Ovary (tissue), 10 donors: ENCODE measurements at regions of chr3 and their contacts with region 1.

Region 1: DNA sequence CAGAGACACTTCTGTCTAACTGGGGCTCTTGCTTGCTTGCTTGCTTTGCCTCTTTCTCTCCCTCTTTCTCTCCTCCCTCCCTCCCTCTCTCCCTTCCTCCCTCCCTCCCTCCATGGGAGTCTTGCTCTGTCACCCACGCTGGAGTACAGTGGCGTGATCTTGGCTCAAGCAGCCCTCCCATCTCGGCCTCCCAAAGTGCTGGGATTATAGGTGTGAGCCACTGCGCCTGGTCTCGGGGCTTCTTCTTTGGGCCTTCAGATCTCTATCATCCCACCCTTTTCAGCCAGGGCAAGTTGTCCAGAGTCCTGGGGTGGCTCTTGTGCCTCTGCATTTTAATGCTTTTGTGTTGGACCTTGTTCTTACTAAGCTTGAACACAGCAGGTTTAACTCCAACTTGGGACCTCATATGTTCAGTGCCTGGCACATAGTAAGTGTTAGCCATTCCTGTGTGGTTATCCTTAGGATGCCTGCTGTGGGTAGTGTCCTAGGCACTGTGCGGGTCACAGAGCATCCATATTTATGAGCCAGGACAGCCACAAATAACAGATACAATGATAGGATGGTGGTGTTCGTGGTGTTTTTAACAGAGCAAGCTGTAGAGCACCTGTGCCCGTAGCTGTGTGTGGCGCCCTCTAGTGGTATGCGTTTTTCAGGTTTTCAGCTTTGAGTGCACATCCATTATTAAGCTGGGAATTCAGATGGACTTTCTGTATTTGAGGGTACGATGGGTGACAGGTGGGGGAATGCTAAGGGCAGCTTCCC is 75.1 kb downstream of the CCK start:
- DNase-seq: peak; percentile 43 to 72 (median 48)
- H3K4me3 ChIP-seq: no peak overlapping the region
- H3K27ac ChIP-seq: no peak overlapping the region
- H3K4me1 ChIP-seq: no peaks in the 10 kb centered on the region
- H3K27me3 ChIP-seq: no peaks in the 10 kb centered on the region
- CTCF ChIP-seq: peak; percentile 41 to 56 (median 49)
- EP300 ChIP-seq: no peak
- POLR2A ChIP-seq: no peak

Region 2: DNA sequence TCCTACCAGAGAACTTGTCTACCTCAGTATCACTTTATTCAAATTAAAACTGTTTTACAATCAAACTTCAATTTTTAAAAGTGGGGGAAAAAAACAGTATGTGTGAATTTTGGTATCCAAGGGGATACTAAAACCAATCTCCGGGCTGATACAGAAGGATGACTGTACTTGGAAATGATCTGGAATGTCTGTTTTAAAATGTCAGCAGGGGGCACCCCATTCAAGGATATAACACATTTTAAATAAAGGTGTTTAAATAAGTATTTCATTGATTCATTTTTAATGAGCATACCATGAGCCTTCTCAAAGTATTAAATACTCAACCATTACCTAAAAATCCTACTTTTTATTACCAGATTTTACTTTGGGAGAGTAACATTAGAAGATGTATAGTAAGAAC is 296.9 kb before region 1 on chr3:
- intact Hi-C with region 1: loop called in 1 of 4 experiments (anchors 10 kb)
- DNase-seq: peak in 1 of 5 donors; percentile 25
- H3K4me3 ChIP-seq: no peak overlapping the region
- H3K27ac ChIP-seq: no peak overlapping the region
- H3K4me1 ChIP-seq: no peaks in the 10 kb centered on the region
- H3K27me3 ChIP-seq: no peaks in the 10 kb centered on the region
- CTCF ChIP-seq: peak in 2 of 3 donors; percentile 19 to 72
- EP300 ChIP-seq: no peak
- POLR2A ChIP-seq: no peak

Region 3: GRCh38 chr3:42118762-42119361 is 72.0 kb before region 1 on chr3:
- intact Hi-C with region 1: loop called in 1 of 4 experiments (anchors 10 kb)
- DNase-seq: no peak
- H3K4me3 ChIP-seq: no peak overlapping the region
- H3K27ac ChIP-seq: no peak overlapping the region
- H3K4me1 ChIP-seq: peaks cover 5% of the 10 kb centered on the region
- H3K27me3 ChIP-seq: no peaks in the 10 kb centered on the region
- CTCF ChIP-seq: no peak
- EP300 ChIP-seq: no peak
- POLR2A ChIP-seq: no peak